ENCODE measurements at regions of chr9 and their contacts with region 1.

Region 1: DNA sequence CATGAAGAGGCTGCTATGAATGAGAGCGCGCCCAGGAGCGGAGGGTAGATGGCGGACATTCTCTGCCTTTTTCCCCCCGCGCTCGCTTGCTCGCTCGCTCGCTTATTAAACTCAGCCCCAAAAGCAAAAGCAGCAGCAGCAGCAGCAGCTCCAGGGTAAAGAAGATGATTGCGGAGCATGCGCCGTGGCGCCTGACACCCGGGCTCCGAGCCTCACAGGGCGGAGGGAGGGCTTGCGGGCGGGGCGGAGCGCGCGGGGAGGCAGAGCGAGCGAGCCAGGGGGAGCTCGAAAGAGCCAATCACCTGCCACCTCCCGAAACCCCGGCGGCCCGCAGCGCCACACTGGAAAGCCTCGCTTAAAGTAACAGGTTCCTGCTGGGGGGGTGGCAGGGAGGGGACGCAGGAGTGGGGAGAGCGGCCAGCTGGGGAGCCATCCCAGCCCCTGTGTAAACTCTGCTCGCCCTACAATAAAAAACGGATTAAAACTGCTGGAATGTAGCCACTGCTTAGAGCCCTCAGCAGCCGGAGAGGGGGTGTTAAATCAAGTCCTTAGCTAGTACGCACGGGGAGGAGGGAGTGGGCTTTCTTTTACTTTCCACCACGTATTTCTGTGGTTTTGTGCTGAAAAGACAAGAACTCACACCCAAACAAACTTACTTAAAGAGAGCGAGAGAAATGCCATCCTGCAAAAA is at the start of gene MLLT3:
- H3K4me3 Mint-ChIP-seq: peak within 1 kb of the TSS; percentile 92
- H3K27ac Mint-ChIP-seq: peak within 1 kb of the TSS; percentile 80
- H3K4me1 Mint-ChIP-seq: peaks cover 47% of the 10 kb centered on the region
- H3K27me3 Mint-ChIP-seq: peaks cover 43% of the 10 kb centered on the region

Region 2: GRCh38 chr9:19925817-19926503 is 696.5 kb before region 1 on chr9:
- intact Hi-C with region 1: loop called (anchors 10 kb)
- H3K4me3 Mint-ChIP-seq: peak overlapping the region; percentile 55
- H3K27ac Mint-ChIP-seq: peak overlapping the region; percentile 50
- H3K4me1 Mint-ChIP-seq: peaks cover 22% of the 10 kb centered on the region
- H3K27me3 Mint-ChIP-seq: peaks cover 16% of the 10 kb centered on the region

Region 3: GRCh38 chr9:20551236-20551635 is 71.2 kb before region 1 on chr9:
- intact Hi-C with region 1: no loop called
- H3K4me3 Mint-ChIP-seq: no peak overlapping the region
- H3K27ac Mint-ChIP-seq: no peak overlapping the region
- H3K4me1 Mint-ChIP-seq: peaks cover 12% of the 10 kb centered on the region
- H3K27me3 Mint-ChIP-seq: no peaks in the 10 kb centered on the region

Region 4: GRCh38 chr9:20684035-20684872 is 61.8 kb after region 1 on chr9 and contains the start of gene FOCAD:
- intact Hi-C with region 1: loop called (anchors 2 kb)
- H3K4me3 Mint-ChIP-seq: peak within 1 kb of the TSS; percentile 84
- H3K27ac Mint-ChIP-seq: peak within 1 kb of the TSS; percentile 82
- H3K4me1 Mint-ChIP-seq: peaks cover 12% of the 10 kb centered on the region
- H3K27me3 Mint-ChIP-seq: no peaks in the 10 kb centered on the region

Region 5: DNA sequence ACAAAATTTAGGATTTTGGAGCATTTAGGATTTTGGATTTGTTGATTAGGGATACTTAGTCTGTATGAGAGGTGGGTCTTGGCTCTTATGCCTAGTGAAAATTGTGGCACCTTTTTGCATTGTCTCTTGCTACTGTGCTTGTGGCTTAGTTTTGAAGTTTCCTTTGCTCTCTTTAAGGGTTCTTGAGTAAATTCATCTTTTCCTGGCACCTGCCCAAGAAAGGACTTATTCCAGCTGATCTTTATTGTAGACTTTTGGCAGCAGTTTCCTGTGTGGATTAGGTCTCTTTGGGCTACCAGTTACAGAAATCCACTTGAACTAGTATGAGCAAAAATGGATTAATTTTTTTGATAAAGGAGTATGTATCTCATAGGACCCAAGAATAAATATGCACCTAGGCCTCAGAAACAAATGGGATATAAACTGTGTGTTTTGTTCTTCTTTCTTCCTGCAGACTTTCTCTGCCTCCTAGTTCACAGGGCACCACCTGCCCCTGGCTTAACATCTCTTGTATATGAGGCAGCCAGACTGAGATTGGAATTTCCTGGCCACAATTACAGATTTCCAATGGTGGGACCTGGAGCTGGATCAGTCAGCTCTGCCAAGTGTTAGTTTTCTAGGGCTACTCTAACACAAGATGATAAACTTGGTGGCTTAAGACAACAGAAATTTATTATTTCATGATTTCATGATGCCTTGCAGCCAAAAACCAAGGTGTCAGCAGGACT is 106.2 kb after region 1 on chr9:
- intact Hi-C with region 1: no loop called
- H3K4me3 Mint-ChIP-seq: no peak overlapping the region
- H3K27ac Mint-ChIP-seq: no peak overlapping the region
- H3K4me1 Mint-ChIP-seq: peaks cover 5% of the 10 kb centered on the region
- H3K27me3 Mint-ChIP-seq: no peaks in the 10 kb centered on the region

Measured in dendritic cell treated with granulocyte-macrophage colony-stimulating factor and Interleukin-4, amounts not matched to agents 40 ng/mL and 50 ng/mL, for 4 days (primary cell).